ENCODE measurements at regions of chr20 and their contacts with region 1.

Region 1: DNA sequence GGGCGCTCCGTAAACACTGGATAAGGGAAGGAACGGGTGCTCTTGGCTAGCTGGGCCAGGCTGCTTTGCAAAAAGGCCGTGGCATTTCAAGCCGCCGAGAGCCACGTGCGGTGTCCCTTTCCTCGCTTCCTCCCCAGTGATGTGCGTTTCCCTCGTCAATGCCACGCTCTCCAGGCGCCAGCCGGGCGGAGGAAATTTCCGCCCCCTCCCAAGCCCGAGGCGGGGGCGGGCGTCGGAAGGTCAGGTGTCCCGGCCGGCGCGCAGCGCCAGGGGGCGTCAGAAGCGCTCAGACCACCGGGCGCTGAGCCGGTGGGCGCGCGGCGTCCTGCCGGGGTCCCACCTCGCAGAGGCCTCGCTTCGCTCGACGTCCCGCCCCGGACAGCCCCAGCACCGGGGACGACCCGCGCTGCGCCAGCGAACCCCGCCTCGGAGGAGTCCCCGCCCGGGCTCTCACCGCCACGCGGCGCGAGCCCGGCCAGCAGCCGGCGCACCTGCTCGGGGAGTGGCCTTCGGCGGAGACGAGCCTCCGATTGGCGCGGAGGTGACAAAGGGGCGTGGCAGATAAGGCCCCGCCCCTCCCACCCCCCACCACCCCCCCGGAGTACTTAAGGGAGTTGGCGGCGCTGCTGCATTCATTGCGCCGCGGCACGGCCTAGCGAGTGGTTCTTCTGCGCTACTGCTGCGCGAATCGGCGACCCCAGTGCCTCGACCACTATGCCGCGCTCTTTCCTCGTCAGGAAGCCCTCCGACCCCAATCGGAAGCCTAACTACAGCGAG is at the start of gene SNAI1:
- DNase-seq: peak; percentile 99
- CTCF ChIP-seq: peak; percentile 54

Region 2: DNA sequence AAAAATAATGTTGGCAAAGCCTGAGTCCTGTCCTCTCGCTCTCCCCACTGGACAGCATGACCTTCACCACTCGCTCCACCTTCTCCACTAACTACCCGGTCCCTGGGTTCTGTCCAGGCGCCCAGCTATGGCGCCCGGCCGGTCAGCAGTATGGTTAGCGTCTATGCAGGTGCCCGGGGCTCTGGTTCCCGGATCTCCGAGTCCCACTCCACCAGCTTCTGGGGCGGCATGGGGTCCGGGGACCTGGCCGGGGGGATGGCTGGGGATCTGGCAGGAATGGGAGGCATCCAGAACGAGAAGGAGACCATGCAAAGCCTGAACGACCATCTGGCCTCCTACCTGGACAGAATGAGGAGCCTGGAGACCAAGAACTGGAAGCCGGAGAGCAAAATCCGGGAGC is 25.8 kb before region 1 on chr20:
- CTCF ChIA-PET with region 1: interaction called, 14 read pairs
- POLR2A ChIA-PET with region 1: no interaction called
- DNase-seq: no peak
- CTCF ChIP-seq: no peak

Region 3: GRCh38 chr20:50003253-50003656 is 20.7 kb after region 1 on chr20:
- CTCF ChIA-PET with region 1: interaction called, 21 read pairs
- POLR2A ChIA-PET with region 1: interaction called, 5 read pairs
- DNase-seq: no peak
- CTCF ChIP-seq: no peak

Region 4: DNA sequence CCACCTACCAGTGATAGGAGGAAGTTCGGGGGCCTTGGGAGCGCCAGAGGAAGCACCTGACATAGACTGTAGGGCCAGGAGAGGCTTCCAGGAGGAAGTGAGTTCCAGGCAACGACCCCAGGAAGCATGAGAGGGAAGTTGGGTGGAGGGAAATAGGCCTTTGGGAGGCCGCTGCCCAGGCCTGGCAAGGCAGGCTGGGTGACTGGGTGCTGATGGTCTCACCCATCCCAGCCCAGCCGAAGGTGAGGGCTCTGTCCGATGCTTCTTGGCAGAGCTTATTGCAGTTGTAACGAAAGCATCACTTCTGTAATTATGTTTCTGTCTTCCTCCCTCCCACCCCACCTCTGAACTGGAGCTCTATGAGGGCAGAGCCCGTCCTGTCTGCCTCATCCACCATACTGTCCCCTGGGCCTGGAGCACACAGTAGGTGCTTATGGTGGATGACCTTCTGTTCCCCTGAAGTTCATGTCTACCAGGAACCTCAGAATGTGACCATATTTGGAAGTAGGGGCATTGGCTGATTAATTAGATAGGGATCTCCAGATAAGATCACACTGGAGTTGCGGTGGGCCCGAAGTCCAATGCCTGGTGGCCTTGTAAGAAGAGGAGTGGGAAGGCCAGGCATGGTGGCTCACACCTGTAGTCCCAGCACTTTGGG is 76.3 kb after region 1 on chr20:
- CTCF ChIA-PET with region 1: interaction called, 13 read pairs
- POLR2A ChIA-PET with region 1: interaction called, 4 read pairs
- DNase-seq: no peak
- CTCF ChIP-seq: no peak

Region 5: GRCh38 chr20:50095476-50096078 is 113.0 kb after region 1 on chr20:
- CTCF ChIA-PET with region 1: interaction called, 23 read pairs
- POLR2A ChIA-PET with region 1: no interaction called
- DNase-seq: no peak
- CTCF ChIP-seq: no peak

Region 6: DNA sequence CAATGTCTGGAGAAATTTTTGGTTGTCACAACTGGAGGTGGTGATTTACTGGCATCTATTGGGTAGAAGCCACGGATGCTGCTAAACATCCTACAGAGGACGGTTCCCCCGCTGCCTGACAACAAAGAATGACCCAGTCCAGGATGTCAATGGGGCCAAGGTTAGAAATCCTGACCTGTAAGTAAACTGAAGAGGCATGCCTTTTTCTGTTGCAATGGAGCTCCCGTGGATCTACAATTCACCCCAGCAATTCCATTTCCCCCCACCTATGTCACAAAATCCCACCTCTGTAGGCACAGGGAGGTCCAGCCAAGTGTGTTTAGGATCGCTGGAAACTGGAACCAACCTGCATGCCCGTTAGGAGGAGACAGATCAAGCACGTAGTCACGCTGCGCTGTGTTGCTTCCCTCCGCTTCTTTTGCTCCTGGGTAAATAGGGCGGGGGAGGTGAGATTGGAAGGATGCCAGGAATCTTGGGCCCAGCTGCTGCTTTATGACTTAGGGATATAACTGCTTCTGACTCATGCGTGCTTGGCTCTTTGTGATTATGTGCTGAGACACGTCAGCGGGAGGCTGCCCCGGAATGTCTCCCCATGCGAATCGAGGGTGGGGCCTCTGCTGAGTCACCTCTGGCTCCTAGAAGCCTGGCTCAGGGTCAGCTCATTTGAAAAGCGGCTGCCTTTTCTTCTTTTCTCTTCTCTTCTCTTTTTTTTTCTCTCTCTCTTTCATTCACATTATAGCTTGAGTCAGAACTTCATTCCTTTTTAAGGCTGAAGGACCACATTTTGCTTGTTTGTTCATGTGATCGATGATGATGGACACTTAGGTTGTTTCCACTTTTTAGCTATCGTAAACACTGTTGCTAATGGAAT is 183.4 kb after region 1 on chr20:
- CTCF ChIA-PET with region 1: interaction called, 47 read pairs
- POLR2A ChIA-PET with region 1: no interaction called
- DNase-seq: peak; percentile 90
- CTCF ChIP-seq: no peak